Activated CD4-positive, alpha-beta memory T cell treated with anti-CD3 and anti-CD28 coated beads for 36 hours (primary cell): ENCODE measurements at regions of chr2 and their contacts with region 1.

Region 1: DNA sequence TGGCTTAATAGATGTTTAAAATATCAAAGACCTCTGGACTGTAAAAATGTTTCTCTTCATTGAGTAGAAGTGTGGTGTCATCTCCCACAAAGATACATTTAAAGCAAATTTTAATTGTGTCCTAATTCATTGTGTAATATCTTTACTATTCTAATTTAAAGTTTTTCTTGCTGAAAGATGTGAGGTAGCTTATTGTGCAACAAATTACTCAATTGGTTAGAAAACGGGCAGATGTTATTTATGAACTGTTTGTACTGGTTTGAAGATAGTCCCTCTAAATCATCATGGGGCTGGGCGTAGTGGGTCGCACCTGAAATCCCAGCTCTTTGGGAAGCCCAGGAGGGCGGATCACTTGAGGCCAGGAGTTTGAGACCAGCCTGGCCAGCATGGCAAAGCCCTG is 65.3 kb downstream of the CYBRD1 start:
- DNase-seq: no peak
- H3K4me3 Mint-ChIP-seq: no peak overlapping the region
- H3K27ac Mint-ChIP-seq: no peak overlapping the region
- H3K4me1 Mint-ChIP-seq: no peaks in the 10 kb centered on the region
- H3K27me3 Mint-ChIP-seq: peaks cover 6% of the 10 kb centered on the region

Region 2: GRCh38 chr2:171394164-171394740 is 193.3 kb before region 1 on chr2:
- CTCF ChIA-PET with region 1: no interaction called
- POLR2A ChIA-PET with region 1: no interaction called
- intact Hi-C with region 1: no loop called
- DNase-seq: no peak
- H3K4me3 Mint-ChIP-seq: no peak overlapping the region
- H3K27ac Mint-ChIP-seq: no peak overlapping the region
- H3K4me1 Mint-ChIP-seq: peaks cover 32% of the 10 kb centered on the region
- H3K27me3 Mint-ChIP-seq: no peaks in the 10 kb centered on the region

Region 3: GRCh38 chr2:171598713-171599319 is 11.2 kb after region 1 on chr2:
- CTCF ChIA-PET with region 1: interaction called, 20 read pairs
- POLR2A ChIA-PET with region 1: no interaction called
- intact Hi-C with region 1: no loop called
- DNase-seq: peak; percentile 47
- H3K4me3 Mint-ChIP-seq: no peak overlapping the region
- H3K27ac Mint-ChIP-seq: no peak overlapping the region
- H3K4me1 Mint-ChIP-seq: peaks cover 2% of the 10 kb centered on the region
- H3K27me3 Mint-ChIP-seq: peaks cover 4% of the 10 kb centered on the region